IMR-90 (cell line): ENCODE measurements at regions of chr22 and their contacts with region 1.

Region 1: DNA sequence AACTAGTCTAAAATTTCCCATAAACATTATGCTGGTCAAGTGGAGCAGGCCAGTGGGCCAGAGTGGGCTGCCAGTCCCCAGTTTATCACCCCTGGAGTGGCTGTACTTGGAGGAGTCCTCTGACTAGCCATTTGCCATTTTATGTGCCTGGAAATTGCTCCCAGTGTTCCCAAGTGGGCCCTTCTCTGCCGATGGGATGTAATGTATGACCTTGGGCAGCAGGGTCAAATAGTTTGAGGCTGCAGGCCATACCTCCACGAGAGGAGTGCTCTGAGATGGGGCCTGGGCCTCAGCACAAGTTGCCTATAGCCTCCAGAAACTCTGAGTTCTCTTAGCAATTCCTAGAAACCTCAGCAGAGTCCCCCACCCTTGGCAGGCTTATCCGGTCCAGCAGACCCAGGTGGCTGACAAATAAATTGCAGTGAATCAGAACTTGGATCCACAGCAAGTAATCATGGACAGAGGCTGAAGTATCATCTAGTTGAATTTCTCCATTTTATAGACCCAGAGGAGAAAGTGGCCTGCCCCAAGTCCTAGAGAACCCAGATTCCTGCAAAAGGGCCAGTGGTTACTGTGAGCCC is 17.8 kb upstream of the PATZ1 start:
- DNase-seq: no peak
- ATAC-seq: no peak
- H3K4me3 ChIP-seq: no peak overlapping the region
- H3K27ac ChIP-seq: no peak overlapping the region
- H3K4me1 ChIP-seq: no peaks in the 10 kb centered on the region
- H3K27me3 ChIP-seq: no peaks in the 10 kb centered on the region; the same call in 1 of the 2 replicates
- CTCF ChIP-seq: no peak
- POLR2A ChIP-seq: no peak
- RAD21 ChIP-seq: no peak

Region 2: DNA sequence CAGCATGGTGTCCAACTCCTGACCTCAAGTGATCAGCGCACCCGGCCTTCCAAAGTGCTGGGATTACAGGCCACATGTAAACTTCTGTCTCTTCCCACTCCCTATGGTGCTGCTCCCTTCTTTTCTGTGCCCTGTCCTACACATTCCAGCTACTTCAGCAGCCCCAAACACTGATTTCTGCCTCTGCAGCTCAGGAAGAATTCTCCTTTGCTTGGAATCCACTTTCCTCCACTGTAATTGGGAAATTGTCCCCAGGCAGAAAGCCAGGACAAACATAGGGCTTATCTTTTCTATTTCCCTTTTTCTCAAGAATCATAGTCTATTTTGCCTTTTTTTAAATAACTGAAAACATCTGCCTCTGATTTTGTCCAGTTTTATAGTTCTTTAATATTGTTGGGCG is 14.1 kb after region 1 on chr22:
- CTCF ChIA-PET with region 1: no interaction called
- POLR2A ChIA-PET with region 1: no interaction called
- dilution Hi-C with region 1: no loop called
- in situ Hi-C with region 1: no loop called
- intact Hi-C with region 1: loop called (anchors 2 kb)
- DNase-seq: peak; percentile 31
- ATAC-seq: peak; percentile 76
- H3K4me3 ChIP-seq: no peak overlapping the region
- H3K27ac ChIP-seq: no peak overlapping the region
- H3K4me1 ChIP-seq: no peaks in the 10 kb centered on the region
- H3K27me3 ChIP-seq: peaks cover 2% of the 10 kb centered on the region
- CTCF ChIP-seq: no peak
- POLR2A ChIP-seq: no peak
- RAD21 ChIP-seq: no peak

Region 3: GRCh38 chr22:32518848-32519247 is 1154.9 kb after region 1 on chr22:
- CTCF ChIA-PET with region 1: no interaction called
- POLR2A ChIA-PET with region 1: no interaction called
- dilution Hi-C with region 1: no loop called
- in situ Hi-C with region 1: no loop called
- intact Hi-C with region 1: no loop called
- DNase-seq: no peak
- ATAC-seq: no peak
- H3K4me3 ChIP-seq: no peak overlapping the region
- H3K27ac ChIP-seq: no peak overlapping the region
- H3K4me1 ChIP-seq: no peaks in the 10 kb centered on the region
- H3K27me3 ChIP-seq: peaks cover 3% of the 10 kb centered on the region
- CTCF ChIP-seq: no peak
- POLR2A ChIP-seq: no peak
- RAD21 ChIP-seq: no peak